ENCODE measurements at regions of chr3 and their contacts with region 1.

Region 1: GRCh38 chr3:32283304-32283703 is 44.8 kb downstream of the CMTM8 start:
- DNase-seq: no peak
- ATAC-seq: no peak
- H3K4me3 ChIP-seq: no peak overlapping the region
- H3K4me3 Mint-ChIP-seq: no peak overlapping the region
- H3K27ac ChIP-seq: no peak overlapping the region
- H3K27ac Mint-ChIP-seq: peak overlapping the region; percentile 87
- H3K4me1 ChIP-seq: peaks cover 27% of the 10 kb centered on the region
- H3K4me1 Mint-ChIP-seq: peaks cover 41% of the 10 kb centered on the region
- H3K27me3 ChIP-seq: no peaks in the 10 kb centered on the region
- H3K27me3 Mint-ChIP-seq: no peaks in the 10 kb centered on the region
- CTCF ChIP-seq: no peak

Region 2: DNA sequence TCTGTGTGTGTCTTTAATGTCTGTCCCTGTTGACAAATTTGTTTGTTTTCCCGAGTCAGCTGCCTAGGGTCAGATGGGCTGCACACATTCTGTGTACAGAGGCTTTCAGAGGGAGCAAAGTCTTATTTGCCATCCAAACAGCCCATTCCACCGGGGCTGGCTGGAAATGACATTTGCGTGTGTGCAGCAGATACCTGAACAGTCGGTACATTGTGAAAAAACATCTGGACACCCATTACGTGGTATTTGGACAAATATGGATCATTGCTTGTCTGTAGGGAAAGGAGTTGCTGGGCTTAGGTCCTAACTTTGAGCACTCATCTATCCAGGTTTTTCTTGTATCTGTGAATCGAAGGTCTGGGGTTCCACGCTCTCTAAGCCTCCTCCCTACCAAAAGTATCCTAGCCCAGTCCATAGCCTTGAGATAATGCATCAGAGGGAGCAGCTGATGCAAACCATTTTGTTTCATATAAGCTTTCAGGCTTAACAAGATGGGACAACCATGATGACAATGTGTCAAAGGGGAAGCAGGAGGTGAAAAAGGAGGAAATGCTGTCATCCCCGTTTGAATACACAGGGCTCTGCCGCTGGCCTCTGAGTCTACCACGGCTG is 67.0 kb before region 1 on chr3:
- CTCF ChIA-PET with region 1: no interaction called
- POLR2A ChIA-PET with region 1: no interaction called
- intact Hi-C with region 1: no loop called
- DNase-seq: no peak
- ATAC-seq: no peak
- H3K4me3 ChIP-seq: no peak overlapping the region
- H3K4me3 Mint-ChIP-seq: no peak overlapping the region
- H3K27ac ChIP-seq: no peak overlapping the region
- H3K27ac Mint-ChIP-seq: no peak overlapping the region
- H3K4me1 ChIP-seq: no peaks in the 10 kb centered on the region
- H3K4me1 Mint-ChIP-seq: no peaks in the 10 kb centered on the region
- H3K27me3 ChIP-seq: no peaks in the 10 kb centered on the region
- H3K27me3 Mint-ChIP-seq: peaks cover 5% of the 10 kb centered on the region
- CTCF ChIP-seq: no peak

Region 3: DNA sequence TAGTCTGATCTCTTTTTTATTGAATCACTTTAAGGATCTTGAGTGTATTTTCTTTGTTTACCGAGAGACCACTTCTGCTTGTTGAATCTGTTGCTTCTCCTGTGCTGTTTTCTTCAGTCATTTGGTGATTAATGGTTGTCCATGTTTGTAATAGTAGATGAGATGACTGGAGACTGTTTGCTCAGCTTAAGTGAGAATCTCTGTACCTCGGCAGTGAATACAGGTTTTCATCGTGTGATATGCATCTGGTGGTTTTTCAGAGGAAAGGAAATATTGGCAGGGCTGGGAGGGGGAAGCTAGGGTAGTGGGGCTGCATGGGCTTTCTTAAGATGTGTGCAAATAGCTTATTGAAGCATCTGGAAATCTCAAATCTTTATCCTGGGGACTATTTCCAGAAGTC is 25.7 kb before region 1 on chr3:
- CTCF ChIA-PET with region 1: no interaction called
- POLR2A ChIA-PET with region 1: no interaction called
- intact Hi-C with region 1: loop called in 1 of 2 experiments (anchors 2 kb)
- DNase-seq: no peak
- ATAC-seq: peak; percentile 39
- H3K4me3 ChIP-seq: no peak overlapping the region
- H3K4me3 Mint-ChIP-seq: no peak overlapping the region
- H3K27ac ChIP-seq: no peak overlapping the region
- H3K27ac Mint-ChIP-seq: no peak overlapping the region
- H3K4me1 ChIP-seq: peaks cover 3% of the 10 kb centered on the region
- H3K4me1 Mint-ChIP-seq: peaks cover 33% of the 10 kb centered on the region
- H3K27me3 ChIP-seq: no peaks in the 10 kb centered on the region
- H3K27me3 Mint-ChIP-seq: no peaks in the 10 kb centered on the region
- CTCF ChIP-seq: no peak

Measured in CD4-positive, alpha-beta T cell (primary cell).